ENCODE measurements at regions of chr4 and their contacts with region 1.

Region 1: DNA sequence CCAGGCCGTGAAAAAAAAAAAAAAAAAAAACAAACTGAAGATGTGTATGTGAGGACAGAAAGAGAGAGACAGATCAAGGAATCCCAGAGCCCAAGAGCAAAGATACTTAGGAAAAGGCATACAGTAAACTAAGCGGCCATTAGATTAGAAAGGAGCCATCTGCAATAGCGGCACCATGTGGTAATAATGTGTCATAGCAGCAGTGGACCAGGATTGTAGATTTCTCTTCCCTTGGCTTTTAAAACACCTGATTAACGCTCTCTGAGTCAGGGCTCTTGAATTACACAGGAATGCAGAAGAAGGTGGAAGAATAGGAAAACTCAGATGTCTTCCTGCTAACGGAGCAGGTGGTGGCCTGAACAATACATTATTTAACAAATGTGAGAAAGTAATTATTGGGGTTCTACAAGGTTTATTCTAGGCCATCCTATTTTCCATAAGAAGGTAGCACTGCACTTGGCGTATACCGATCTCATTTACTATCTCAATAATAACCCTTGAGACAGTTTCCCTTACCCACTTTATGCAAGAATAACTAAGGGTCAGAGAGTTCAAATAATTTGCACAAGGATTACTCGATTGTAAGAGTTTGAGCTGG is 182.7 kb downstream of the KCNIP4 start:
- DNase-seq: peak in 1 of 2 experiments; percentile 48
- H3K4me3 ChIP-seq: no peak overlapping the region
- H3K4me3 Mint-ChIP-seq: no peak overlapping the region
- H3K27ac Mint-ChIP-seq: no peak overlapping the region
- H3K4me1 ChIP-seq: no peaks in the 10 kb centered on the region
- H3K4me1 Mint-ChIP-seq: no peaks in the 10 kb centered on the region
- H3K27me3 ChIP-seq: no peaks in the 10 kb centered on the region
- H3K27me3 Mint-ChIP-seq: peaks cover 9% of the 10 kb centered on the region
- CTCF ChIP-seq: peak; percentile 69 to 77

Region 2: GRCh38 chr4:20773144-20773997 is 992.5 kb before region 1 on chr4:
- CTCF ChIA-PET with region 1: no interaction called
- POLR2A ChIA-PET with region 1: no interaction called
- intact Hi-C with region 1: loop called (anchors 5 kb)
- DNase-seq: peak in 1 of 2 experiments; percentile 55
- H3K4me3 ChIP-seq: no peak overlapping the region
- H3K4me3 Mint-ChIP-seq: no peak overlapping the region
- H3K27ac Mint-ChIP-seq: no peak overlapping the region
- H3K4me1 ChIP-seq: no peaks in the 10 kb centered on the region
- H3K4me1 Mint-ChIP-seq: no peaks in the 10 kb centered on the region
- H3K27me3 ChIP-seq: no peaks in the 10 kb centered on the region
- H3K27me3 Mint-ChIP-seq: no peaks in the 10 kb centered on the region
- CTCF ChIP-seq: peak; percentile 48 to 51

Region 3: DNA sequence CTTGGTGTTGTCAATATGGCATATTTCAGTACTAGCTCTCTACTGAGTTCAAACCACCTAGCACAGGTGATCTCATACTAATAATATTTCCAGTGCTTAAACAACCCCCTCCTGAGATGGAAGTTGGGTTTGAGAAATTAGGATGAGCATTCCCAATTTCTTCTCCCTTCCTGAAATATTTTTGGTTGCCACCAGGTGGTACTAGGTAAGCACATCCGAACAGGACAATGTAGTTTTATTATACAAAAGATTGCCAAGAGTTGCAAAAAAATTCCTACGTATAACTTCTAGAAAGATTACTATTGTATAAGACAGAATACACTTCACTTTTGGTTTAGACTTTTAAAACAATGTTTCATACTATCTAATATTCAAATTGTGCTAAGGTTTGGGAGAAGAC is 581.1 kb before region 1 on chr4:
- CTCF ChIA-PET with region 1: no interaction called
- POLR2A ChIA-PET with region 1: no interaction called
- intact Hi-C with region 1: loop called (anchors 10 kb)
- DNase-seq: peak in 1 of 2 experiments; percentile 25
- H3K4me3 ChIP-seq: no peak overlapping the region
- H3K4me3 Mint-ChIP-seq: no peak overlapping the region
- H3K27ac Mint-ChIP-seq: no peak overlapping the region
- H3K4me1 ChIP-seq: no peaks in the 10 kb centered on the region; the same call in 1 of the 2 replicates
- H3K4me1 Mint-ChIP-seq: no peaks in the 10 kb centered on the region
- H3K27me3 ChIP-seq: no peaks in the 10 kb centered on the region; the same call in 1 of the 2 replicates
- H3K27me3 Mint-ChIP-seq: peaks cover 3% of the 10 kb centered on the region
- CTCF ChIP-seq: peak; percentile 29 to 45

Region 4: DNA sequence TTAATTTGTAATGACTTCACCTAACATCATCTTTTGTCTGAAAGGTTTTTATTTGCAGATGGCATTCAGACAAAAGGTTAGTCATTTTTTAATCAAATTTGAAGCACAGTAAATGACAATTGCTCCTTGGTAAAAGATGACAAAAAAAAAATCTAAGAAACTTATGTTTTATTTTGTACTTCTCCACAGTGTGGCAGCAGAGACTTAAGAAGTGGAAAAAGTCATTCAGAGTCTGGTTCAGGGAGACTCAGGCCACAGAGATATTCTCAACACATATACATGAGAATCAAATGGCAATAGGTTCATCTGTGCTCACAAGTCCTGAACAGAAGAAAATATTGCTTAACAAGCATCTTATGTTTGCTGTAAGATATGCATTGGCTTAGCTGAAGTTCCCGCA is 253.6 kb before region 1 on chr4:
- CTCF ChIA-PET with region 1: interaction called, 4 read pairs
- POLR2A ChIA-PET with region 1: no interaction called
- intact Hi-C with region 1: loop called (anchors 1 kb)
- DNase-seq: peak in 1 of 2 experiments; percentile 29
- H3K4me3 ChIP-seq: no peak overlapping the region
- H3K4me3 Mint-ChIP-seq: no peak overlapping the region
- H3K27ac Mint-ChIP-seq: no peak overlapping the region
- H3K4me1 ChIP-seq: no peaks in the 10 kb centered on the region
- H3K4me1 Mint-ChIP-seq: no peaks in the 10 kb centered on the region
- H3K27me3 ChIP-seq: no peaks in the 10 kb centered on the region
- H3K27me3 Mint-ChIP-seq: peaks cover 4% of the 10 kb centered on the region
- CTCF ChIP-seq: peak; percentile 28 to 35

Region 5: GRCh38 chr4:21948347-21949072 is 182.6 kb after region 1 on chr4 and contains the start of gene KCNIP4:
- CTCF ChIA-PET with region 1: no interaction called
- POLR2A ChIA-PET with region 1: no interaction called
- intact Hi-C with region 1: no loop called
- DNase-seq: peak in 1 of 2 experiments; percentile 0
- H3K4me3 ChIP-seq: no peak within 1 kb of the TSS
- H3K4me3 Mint-ChIP-seq: no peak within 1 kb of the TSS
- H3K27ac Mint-ChIP-seq: no peak within 1 kb of the TSS
- H3K4me1 ChIP-seq: no peaks in the 10 kb centered on the region
- H3K4me1 Mint-ChIP-seq: no peaks in the 10 kb centered on the region
- H3K27me3 ChIP-seq: no peaks in the 10 kb centered on the region
- H3K27me3 Mint-ChIP-seq: peaks cover 17% of the 10 kb centered on the region
- CTCF ChIP-seq: no peak
- total RNA-seq, gene KCNIP4: not detected in 2 replicates

Region 6: GRCh38 chr4:21979196-21979595 is 213.3 kb after region 1 on chr4:
- CTCF ChIA-PET with region 1: no interaction called
- POLR2A ChIA-PET with region 1: no interaction called
- intact Hi-C with region 1: no loop called
- DNase-seq: no peak
- H3K4me3 ChIP-seq: no peak overlapping the region
- H3K4me3 Mint-ChIP-seq: no peak overlapping the region
- H3K27ac Mint-ChIP-seq: no peak overlapping the region
- H3K4me1 ChIP-seq: no peaks in the 10 kb centered on the region
- H3K4me1 Mint-ChIP-seq: no peaks in the 10 kb centered on the region
- H3K27me3 ChIP-seq: no peaks in the 10 kb centered on the region
- H3K27me3 Mint-ChIP-seq: no peaks in the 10 kb centered on the region
- CTCF ChIP-seq: no peak

Measured in Caco-2 (cell line).